Aorta (tissue), 5 donors: ENCODE measurements at regions of chr3 and their contacts with region 1.

Region 1: DNA sequence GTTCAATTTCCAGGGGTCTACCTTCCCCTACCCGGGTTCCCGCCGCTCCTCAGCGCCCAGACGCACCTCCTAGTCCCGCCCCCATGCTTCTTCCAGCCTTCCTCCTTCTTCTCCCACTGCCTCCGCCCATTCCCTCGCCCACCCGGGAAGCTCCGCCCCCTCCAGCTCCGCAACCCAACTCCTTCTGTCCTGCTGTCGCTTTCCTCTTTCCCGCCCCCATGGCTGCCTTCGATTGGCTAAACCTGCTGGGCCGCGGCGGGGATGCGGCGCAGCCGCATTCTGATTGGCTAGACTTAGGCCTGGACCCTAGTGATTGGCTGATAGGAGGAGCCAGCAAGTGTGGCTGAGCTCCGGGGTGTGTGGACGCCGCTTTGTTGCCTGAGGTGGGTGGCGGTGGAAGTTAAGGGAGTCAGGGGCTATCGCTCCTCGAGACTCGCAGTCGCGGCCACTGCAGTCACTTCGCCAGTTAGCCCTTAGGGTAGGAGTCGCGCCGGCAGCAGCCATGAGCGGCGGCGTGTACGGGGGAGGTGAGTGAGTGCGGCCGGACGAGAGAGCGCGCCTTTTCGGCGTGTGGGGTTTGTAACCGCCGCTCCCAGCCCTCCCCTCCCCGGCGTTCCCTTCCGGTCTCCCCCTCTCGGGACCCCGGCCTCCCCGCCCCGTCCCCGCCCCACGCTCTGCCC is at the start of gene ACTL6A:
- DNase-seq: peak; percentile 100
- ATAC-seq: peak; percentile 99
- H3K4me3 ChIP-seq: peak within 1 kb of the TSS; percentile 82 to 87
- H3K27ac ChIP-seq: peak within 1 kb of the TSS in 1 of 2 donors; percentile 55
- H3K4me1 ChIP-seq: peaks cover 0 to 4% of the 10 kb centered on the region in 2 donors
- H3K27me3 ChIP-seq: no peaks in the 10 kb centered on the region
- total RNA-seq, gene ACTL6A: 22.5 to 24.8 TPM

Region 2: DNA sequence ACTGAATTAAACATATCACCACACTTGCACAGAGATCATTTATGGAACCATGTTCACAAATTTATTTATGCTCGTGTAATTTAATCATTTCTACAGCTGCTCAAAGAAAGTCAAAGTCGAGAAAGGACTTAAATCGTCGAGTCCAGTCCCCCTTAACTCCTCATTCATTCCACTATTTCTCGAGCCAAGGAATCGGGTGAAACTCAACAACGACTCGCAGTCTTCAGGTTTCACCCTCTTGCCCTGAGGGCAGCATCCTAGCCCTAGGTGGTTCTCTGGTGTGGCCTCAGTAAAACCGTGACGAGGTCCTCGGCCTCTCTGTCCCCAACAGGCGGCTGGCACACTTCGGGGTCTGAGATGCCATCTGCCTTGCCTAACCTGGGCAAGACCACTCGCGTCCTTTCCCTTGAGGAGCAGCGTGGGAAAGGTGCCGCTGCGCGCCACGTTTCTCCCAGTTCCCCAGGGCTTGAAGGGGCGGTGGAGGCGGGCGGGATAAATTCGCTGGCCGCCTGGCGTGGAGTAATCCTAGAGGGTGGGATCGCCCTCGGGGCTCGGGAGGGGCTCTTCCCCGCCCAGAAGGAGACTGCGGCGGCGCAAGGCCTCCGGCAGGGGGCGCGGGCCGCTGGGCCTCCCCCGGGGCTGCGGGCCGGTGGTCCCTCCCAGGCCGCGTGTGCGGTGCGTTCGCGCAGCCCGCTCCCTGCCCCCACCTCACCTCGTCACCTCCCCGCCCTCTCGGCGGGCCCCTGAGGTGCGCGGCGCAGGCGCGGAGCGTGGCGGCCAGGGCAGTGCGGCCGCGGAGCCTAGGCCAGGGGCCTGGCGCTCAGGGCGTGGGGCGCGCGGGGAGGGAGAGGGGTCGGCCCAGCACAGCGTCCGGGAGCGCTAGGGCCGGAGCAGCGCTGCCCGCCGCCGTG is 240.2 kb before region 1 on chr3 and contains the start of gene ZNF639:
- intact Hi-C with region 1: loop called in 1 of 2 experiments (anchors 5 kb)
- DNase-seq: peak; percentile 87 to 94
- ATAC-seq: peak; percentile 94
- H3K4me3 ChIP-seq: peak within 1 kb of the TSS; percentile 30 to 74
- H3K27ac ChIP-seq: peak within 1 kb of the TSS; percentile 59 to 83
- H3K4me1 ChIP-seq: no peaks in the 10 kb centered on the region
- H3K27me3 ChIP-seq: no peaks in the 10 kb centered on the region
- total RNA-seq, gene ZNF639: 36.9 to 40.0 TPM

Region 3: GRCh38 chr3:179347345-179348194 is 215.2 kb before region 1 on chr3 and contains the start of gene MFN1:
- intact Hi-C with region 1: loop called in 1 of 2 experiments (anchors 5 kb)
- DNase-seq: peak; percentile 97
- ATAC-seq: peak; percentile 99
- H3K4me3 ChIP-seq: peak within 1 kb of the TSS; percentile 89 to 94
- H3K27ac ChIP-seq: peak within 1 kb of the TSS; percentile 58 to 78
- H3K4me1 ChIP-seq: no peaks in the 10 kb centered on the region
- H3K27me3 ChIP-seq: no peaks in the 10 kb centered on the region
- total RNA-seq, gene MFN1: 56.1 to 61.3 TPM

Region 4: GRCh38 chr3:179421500-179421899 is 141.2 kb before region 1 on chr3:
- intact Hi-C with region 1: loop called (anchors 2 kb)
- DNase-seq: no peak
- ATAC-seq: no peak
- H3K4me3 ChIP-seq: no peak overlapping the region
- H3K27ac ChIP-seq: no peak overlapping the region
- H3K4me1 ChIP-seq: no peaks in the 10 kb centered on the region
- H3K27me3 ChIP-seq: no peaks in the 10 kb centered on the region

Region 5: GRCh38 chr3:179451265-179452175 is 111.2 kb before region 1 on chr3 and contains the start of gene GNB4:
- intact Hi-C with region 1: loop called (anchors 5 kb)
- DNase-seq: peak; percentile 91 to 94
- ATAC-seq: peak; percentile 93
- H3K4me3 ChIP-seq: peak within 1 kb of the TSS; percentile 94 to 97
- H3K27ac ChIP-seq: peak within 1 kb of the TSS; percentile 74 to 97
- H3K4me1 ChIP-seq: peaks cover 3 to 4% of the 10 kb centered on the region in 2 donors
- H3K27me3 ChIP-seq: no peaks in the 10 kb centered on the region
- total RNA-seq, gene GNB4: 56.4 to 84.9 TPM

Region 6: DNA sequence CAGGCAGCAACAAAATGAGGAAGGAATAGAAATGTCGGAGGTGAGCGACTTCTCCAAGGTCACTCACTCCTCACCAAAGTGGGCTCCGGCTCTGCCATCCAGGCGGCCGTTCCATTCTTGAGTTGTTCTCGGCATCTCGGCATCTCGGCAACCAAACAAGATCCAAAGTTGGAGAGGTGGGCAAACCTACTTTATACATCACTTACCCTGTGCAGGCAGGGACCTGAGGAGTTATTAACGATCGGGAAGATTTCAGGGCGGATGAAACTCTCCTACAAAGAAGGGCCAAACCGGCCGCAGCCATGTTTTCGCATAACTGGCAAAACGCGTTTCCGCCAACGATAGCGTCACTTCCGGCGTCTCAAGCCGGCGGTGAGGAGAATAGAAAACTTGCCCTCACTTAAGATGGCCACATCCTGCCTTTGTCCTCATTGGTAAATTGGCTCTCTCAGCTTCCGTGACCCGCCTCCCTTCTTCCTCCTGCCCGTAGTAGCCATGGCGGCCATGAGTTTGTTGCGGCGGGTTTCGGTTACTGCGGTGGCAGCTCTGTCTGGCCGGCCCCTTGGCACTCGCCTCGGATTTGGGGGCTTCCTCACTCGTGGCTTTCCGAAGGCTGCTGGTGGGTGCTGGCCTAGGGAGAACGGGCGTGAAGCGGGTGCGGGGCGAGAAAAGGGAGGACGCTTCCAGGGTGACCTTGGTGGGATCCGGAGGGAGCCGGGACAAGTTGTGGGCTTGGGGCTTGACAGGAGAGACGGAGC is 41.8 kb after region 1 on chr3 and contains the starts of genes MRPL47 and NDUFB5:
- intact Hi-C with region 1: loop called in 1 of 2 experiments (anchors 5 kb)
- DNase-seq: peak; percentile 96 to 97
- ATAC-seq: peak; percentile 100
- H3K4me3 ChIP-seq: peak within 1 kb of the TSS; percentile 91 to 93
- H3K27ac ChIP-seq: peak within 1 kb of the TSS; percentile 84 to 88
- H3K4me1 ChIP-seq: no peaks in the 10 kb centered on the region
- H3K27me3 ChIP-seq: no peaks in the 10 kb centered on the region
- total RNA-seq, gene MRPL47: 19.7 to 23.7 TPM
- total RNA-seq, gene NDUFB5: 32.5 to 52.6 TPM